Mucosa of descending colon (tissue), 3 donors: ENCODE measurements at regions of chr4 and their contacts with region 1.

Region 1: DNA sequence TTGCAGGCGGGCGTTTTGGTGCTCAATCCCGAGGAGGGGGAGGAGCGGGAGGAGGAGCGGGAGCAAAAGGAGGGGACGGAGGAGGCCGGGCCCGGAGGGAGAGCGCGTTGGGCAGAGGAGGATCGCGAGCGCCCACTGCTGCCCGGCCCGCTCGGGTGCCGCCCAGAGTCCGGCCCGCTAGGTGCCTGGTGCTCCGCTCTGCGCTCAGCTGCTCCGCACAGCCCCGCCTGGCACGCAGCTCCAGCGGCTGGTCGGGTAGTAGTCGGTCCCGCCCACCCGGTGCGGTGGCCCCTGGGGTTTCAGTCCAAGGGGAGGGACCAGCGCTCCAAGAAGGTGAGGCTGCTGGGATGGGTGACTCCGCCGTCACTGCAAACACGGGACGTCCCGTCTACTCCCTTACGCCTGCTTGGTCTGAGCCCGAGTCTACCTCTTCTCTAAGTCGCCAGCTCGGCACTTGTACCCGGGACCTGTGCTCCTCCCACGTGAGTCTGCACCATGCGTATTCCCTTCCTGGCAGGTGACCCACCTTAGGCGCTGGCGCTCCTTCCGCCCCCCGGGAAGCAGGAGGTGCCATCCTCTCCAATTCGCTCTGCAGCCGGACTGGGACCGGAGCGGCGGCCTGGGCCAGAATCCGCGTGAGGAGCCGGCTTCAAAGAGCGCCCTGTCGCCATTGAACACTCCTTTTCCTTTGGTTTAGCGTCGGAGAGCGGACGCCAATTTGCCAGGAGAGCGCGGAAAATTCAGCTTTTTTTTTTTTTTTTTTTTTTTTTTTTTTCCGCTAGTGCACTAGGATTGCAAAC is 405 bp upstream of the HS3ST1 start:
- DNase-seq: peak; percentile 90 to 95 (median 93)
- ATAC-seq: peak; percentile 95
- H3K4me3 ChIP-seq: peak overlapping the region; percentile 33
- H3K4me1 ChIP-seq: peaks cover 11% of the 10 kb centered on the region
- CTCF ChIP-seq: peak; percentile 80

Region 2: DNA sequence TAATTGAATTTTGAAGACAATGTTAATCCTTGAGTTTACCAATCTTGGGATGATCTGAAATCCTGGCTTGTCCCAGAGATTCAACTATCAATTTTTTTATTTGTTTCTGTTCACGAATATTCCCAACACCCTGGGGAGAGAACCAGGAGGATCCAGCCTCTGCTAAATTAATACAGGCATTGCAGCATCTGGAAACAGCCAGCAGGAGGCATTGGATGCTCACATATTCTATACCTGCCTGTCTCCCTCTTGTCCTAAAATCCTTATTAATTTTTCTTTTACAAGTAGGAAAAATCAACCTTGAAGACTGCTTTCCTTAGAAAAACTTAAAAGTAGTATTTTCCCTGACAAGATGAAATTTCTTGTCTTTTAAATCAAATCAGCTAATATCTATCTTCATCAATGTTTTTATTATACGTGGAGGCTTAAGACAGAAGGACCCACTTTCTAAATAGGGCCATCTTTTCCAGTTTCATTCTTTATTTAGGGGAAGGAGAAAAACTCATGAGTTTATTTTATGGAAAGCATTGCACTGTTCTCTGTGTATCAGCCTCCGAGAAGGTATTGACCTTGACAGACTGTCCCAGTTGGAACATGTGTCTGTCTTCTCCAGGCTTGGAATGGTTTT is 846.9 kb before region 1 on chr4:
- intact Hi-C with region 1: loop called (anchors 10 kb)
- DNase-seq: peak in 2 of 3 donors; percentile 31 to 70
- ATAC-seq: peak; percentile 62
- H3K4me3 ChIP-seq: no peak overlapping the region
- H3K4me1 ChIP-seq: no peaks in the 10 kb centered on the region
- CTCF ChIP-seq: peak; percentile 52